HCT116 (cell line): ENCODE measurements at regions of chr3 and their contacts with region 1.

Region 1: GRCh38 chr3:159787191-159787590 is 201.4 kb upstream of the IL12A start:
- DNase-seq: peak; percentile 82
- ATAC-seq: peak; percentile 85
- H3K4me3 ChIP-seq: peak overlapping the region in 1 of 2 experiments; percentile 29; a peak in 2 of 4 replicates
- H3K27ac ChIP-seq: peak overlapping the region; percentile 49
- H3K4me1 ChIP-seq: peaks cover 35 to 46% of the 10 kb centered on the region in 2 experiments
- H3K27me3 ChIP-seq: no peaks in the 10 kb centered on the region
- CTCF ChIP-seq: no peak
- POLR2A ChIP-seq: no peak
- RAD21 ChIP-seq: no peak

Region 2: GRCh38 chr3:159765025-159765859 is 21.9 kb before region 1 on chr3:
- CTCF ChIA-PET with region 1: interaction called, 7 read pairs
- POLR2A ChIA-PET with region 1: interaction called, 3 read pairs
- RAD21 ChIA-PET with region 1: no interaction called
- intact Hi-C with region 1: loop called (anchors 1 kb)
- DNase-seq: peak; percentile 85
- ATAC-seq: peak; percentile 46
- H3K4me3 ChIP-seq: peak overlapping the region; percentile 68 to 79
- H3K27ac ChIP-seq: peak overlapping the region; percentile 86
- H3K4me1 ChIP-seq: peaks cover 31 to 46% of the 10 kb centered on the region in 2 experiments
- H3K27me3 ChIP-seq: no peaks in the 10 kb centered on the region
- CTCF ChIP-seq: no peak
- POLR2A ChIP-seq: no peak
- RAD21 ChIP-seq: no peak

Region 3: GRCh38 chr3:160027541-160028195 is 240.5 kb after region 1 on chr3:
- CTCF ChIA-PET with region 1: no interaction called
- POLR2A ChIA-PET with region 1: no interaction called
- RAD21 ChIA-PET with region 1: no interaction called
- intact Hi-C with region 1: no loop called
- DNase-seq: no peak
- ATAC-seq: 0 out of 2 replicates have a peak, but pooled peaks have one; percentile 15
- H3K4me3 ChIP-seq: no peak overlapping the region
- H3K27ac ChIP-seq: no peak overlapping the region
- H3K4me1 ChIP-seq: peaks cover 0 to 14% of the 10 kb centered on the region in 2 experiments; a peak in 2 of 4 replicates
- H3K27me3 ChIP-seq: no peaks in the 10 kb centered on the region
- CTCF ChIP-seq: no peak
- POLR2A ChIP-seq: no peak
- RAD21 ChIP-seq: no peak

Region 4: GRCh38 chr3:160180581-160181216 is 393.5 kb after region 1 on chr3:
- CTCF ChIA-PET with region 1: no interaction called
- POLR2A ChIA-PET with region 1: no interaction called
- RAD21 ChIA-PET with region 1: no interaction called
- intact Hi-C with region 1: no loop called
- DNase-seq: no peak
- ATAC-seq: no peak
- H3K4me3 ChIP-seq: no peak overlapping the region
- H3K27ac ChIP-seq: no peak overlapping the region
- H3K4me1 ChIP-seq: no peaks in the 10 kb centered on the region
- H3K27me3 ChIP-seq: no peaks in the 10 kb centered on the region
- CTCF ChIP-seq: no peak
- POLR2A ChIP-seq: no peak
- RAD21 ChIP-seq: no peak